ENCODE measurements at regions of chr22 and their contacts with region 1.

Region 1: DNA sequence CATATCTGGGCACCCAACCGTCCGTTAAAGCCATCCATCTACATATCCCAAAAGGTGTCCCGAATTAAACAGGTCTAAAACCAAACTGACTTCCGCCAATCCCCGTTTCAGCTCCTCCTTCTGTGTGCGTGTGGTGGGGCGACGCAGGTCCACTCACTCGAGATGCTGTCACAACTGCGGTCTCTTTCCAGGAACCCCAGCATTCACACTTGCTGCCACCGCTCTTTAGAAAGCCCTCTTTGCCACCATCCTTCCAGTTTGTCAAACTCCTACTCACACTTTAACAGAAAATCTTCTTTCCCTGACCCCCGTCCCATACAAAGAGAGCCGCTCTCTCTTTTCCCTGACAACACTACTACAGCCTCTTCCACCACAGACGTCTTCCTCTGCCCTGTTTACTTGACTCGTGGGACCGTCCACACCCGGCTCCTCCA is 467 bp downstream of the ESS2 start:
- DNase-seq: peak; percentile 75
- ATAC-seq: peak; percentile 35
- H3K4me3 Mint-ChIP-seq: peak overlapping the region; percentile 95
- H3K27ac Mint-ChIP-seq: peak overlapping the region; percentile 96
- H3K4me1 Mint-ChIP-seq: peaks cover 19% of the 10 kb centered on the region
- H3K27me3 Mint-ChIP-seq: peaks cover 24% of the 10 kb centered on the region

Region 2: GRCh38 chr22:19115628-19116027 is 28.4 kb before region 1 on chr22:
- CTCF ChIA-PET with region 1: interaction called, 11 read pairs
- DNase-seq: no peak
- ATAC-seq: peak; percentile 65
- H3K4me3 Mint-ChIP-seq: no peak overlapping the region
- H3K27ac Mint-ChIP-seq: no peak overlapping the region
- H3K4me1 Mint-ChIP-seq: peaks cover 56% of the 10 kb centered on the region
- H3K27me3 Mint-ChIP-seq: no peaks in the 10 kb centered on the region

Region 3: GRCh38 chr22:19178656-19179496 is 34.9 kb after region 1 on chr22 and contains the start of gene SLC25A1:
- CTCF ChIA-PET with region 1: interaction called, 17 read pairs
- DNase-seq: peak; percentile 90
- ATAC-seq: peak; percentile 82
- H3K4me3 Mint-ChIP-seq: peak within 1 kb of the TSS; percentile 77
- H3K27ac Mint-ChIP-seq: peak within 1 kb of the TSS; percentile 73
- H3K4me1 Mint-ChIP-seq: peaks cover 31% of the 10 kb centered on the region
- H3K27me3 Mint-ChIP-seq: no peaks in the 10 kb centered on the region
- total RNA-seq, gene SLC25A1: 60.6 to 68.1 TPM

Region 4: DNA sequence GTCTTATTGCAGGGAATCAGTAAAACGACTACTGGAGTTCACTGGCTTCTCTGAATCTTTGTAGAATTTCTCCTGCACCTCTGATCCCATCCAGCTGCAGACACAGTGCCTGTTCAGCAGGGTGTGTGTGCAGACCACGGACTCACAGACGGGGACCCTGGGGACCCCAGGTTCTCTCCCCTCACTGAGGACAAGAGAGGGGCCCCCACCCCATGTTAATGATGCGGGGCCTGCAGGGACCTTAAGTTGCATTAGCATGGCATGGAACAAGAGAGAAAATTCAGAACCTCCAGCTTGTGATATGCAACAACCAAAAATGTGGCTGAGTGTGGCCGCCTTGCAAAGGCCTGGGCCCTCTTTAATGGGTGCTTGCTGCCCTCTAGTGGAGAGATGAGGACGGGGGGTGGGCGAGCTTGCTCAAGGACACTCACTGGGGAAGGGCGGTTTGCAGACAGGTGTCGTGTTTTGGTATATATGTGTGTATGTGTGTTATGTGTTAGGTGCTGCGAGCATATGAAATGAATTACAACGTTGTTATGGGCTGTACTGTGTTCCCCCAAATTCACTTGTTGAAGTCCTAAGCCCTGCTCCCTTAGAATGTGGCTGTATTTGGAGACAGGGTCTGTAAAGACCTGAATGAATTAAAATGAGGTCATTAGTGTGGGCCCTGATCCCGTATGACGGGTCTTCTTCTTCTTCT is 485.9 kb after region 1 on chr22:
- CTCF ChIA-PET with region 1: interaction called, 15 read pairs
- DNase-seq: peak; percentile 88
- ATAC-seq: peak; percentile 97
- H3K4me3 Mint-ChIP-seq: no peak overlapping the region
- H3K27ac Mint-ChIP-seq: no peak overlapping the region
- H3K4me1 Mint-ChIP-seq: no peaks in the 10 kb centered on the region
- H3K27me3 Mint-ChIP-seq: peaks cover 5% of the 10 kb centered on the region